Psoas muscle (tissue), 8 donors: ENCODE measurements at regions of chr15 and their contacts with region 1.

Region 1: GRCh38 chr15:96070626-96071025 is 259.9 kb upstream of the NR2F2 start:
- DNase-seq: no peak
- ATAC-seq: peak in 1 of 4 donors; percentile 50
- H3K4me3 ChIP-seq: no peak overlapping the region
- H3K27ac ChIP-seq: no peak overlapping the region
- H3K4me1 ChIP-seq: no peaks in the 10 kb centered on the region
- H3K27me3 ChIP-seq: peaks cover 0 to 2% (median 0%) of the 10 kb centered on the region in 3 donors
- CTCF ChIP-seq: no peak

Region 2: GRCh38 chr15:95793231-95793630 is 277.4 kb before region 1 on chr15:
- intact Hi-C with region 1: no loop called
- DNase-seq: no peak
- ATAC-seq: no peak
- H3K4me3 ChIP-seq: no peak overlapping the region
- H3K27ac ChIP-seq: no peak overlapping the region
- H3K4me1 ChIP-seq: no peaks in the 10 kb centered on the region
- H3K27me3 ChIP-seq: no peaks in the 10 kb centered on the region
- CTCF ChIP-seq: no peak

Region 3: GRCh38 chr15:96097661-96098060 is 27.0 kb after region 1 on chr15:
- intact Hi-C with region 1: loop called in 1 of 2 experiments (anchors 1 kb)
- DNase-seq: no peak
- ATAC-seq: no peak
- H3K4me3 ChIP-seq: no peak overlapping the region
- H3K27ac ChIP-seq: no peak overlapping the region
- H3K4me1 ChIP-seq: no peaks in the 10 kb centered on the region
- H3K27me3 ChIP-seq: peaks cover 0 to 4% (median 0%) of the 10 kb centered on the region in 3 donors
- CTCF ChIP-seq: no peak

Region 4: DNA sequence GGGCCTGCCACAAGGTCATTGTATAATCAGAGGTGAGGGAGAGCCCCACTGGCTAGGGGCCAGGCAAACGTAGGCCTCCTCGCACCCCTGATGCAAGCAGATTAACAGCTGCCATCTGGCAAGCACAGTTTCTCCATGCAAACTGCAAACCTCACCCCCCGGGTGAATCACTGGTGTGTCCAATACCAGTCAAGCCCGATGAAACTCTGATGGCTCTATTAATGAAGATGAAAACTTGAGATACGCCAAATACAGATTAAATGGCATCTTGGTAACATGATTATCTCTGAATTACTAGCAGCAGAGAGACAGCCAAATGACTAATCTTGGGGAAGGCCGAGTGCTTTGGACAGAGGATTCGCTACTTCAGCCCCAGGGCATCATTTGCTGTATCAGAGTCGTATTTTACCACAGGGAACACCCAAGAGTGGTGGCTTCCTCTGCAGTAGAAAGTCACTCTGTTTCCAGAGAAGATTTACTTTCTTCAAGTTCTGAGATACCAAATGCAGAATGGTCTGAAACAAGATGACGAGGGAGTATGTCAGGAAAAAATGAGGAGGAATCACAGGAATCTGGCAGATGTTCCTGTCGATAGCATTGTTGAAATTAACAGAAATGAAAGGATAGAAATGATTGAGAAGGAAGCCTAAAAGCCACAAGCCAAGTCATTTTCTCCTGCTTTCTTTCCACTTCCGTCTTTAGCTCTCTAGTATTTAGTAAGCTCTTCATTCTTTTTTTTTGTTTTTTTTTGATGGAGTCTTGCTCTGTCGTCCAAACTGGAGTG is 163.7 kb after region 1 on chr15:
- intact Hi-C with region 1: no loop called
- DNase-seq: peak in 1 of 2 donors; percentile 18
- ATAC-seq: no peak
- H3K4me3 ChIP-seq: no peak overlapping the region
- H3K27ac ChIP-seq: no peak overlapping the region
- H3K4me1 ChIP-seq: no peaks in the 10 kb centered on the region
- H3K27me3 ChIP-seq: no peaks in the 10 kb centered on the region
- CTCF ChIP-seq: no peak